CD14-positive monocyte (primary cell): ENCODE measurements at regions of chr17 and their contacts with region 1.

Region 1: DNA sequence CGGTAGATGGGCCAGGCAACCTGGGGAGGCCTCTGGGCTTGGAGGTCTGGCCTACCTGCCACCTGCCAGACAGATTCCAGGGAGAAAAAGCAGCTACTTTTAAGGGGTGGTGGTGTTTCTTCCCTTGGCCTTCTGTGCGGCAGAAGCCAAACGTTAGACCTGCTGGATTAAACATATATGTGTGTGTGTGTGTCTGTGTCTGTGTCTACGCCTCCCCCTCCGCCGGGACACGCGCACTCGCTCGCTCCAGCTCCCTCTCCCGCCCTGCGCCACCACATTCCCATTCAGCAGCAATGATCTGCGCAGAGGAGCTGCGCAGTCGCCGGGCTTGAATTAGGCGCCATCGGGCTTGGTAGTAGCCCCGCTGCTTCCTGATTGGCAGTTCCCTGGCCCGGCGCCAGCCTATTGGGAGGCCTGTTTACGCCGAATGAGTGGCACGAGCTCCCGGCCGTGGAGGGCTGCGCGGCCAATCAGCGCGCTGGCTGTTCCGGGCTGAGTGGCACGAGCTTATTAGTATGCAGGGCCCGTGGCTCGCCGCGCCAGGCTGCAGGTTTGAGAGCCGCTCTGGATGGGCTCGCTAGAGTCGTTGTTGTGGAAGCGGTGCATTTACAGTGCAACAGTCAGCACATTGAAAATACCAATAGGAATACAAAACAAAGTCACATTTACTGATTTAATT is at the start of gene BAHCC1:
- DNase-seq: peak; percentile 99 to 100 (median 99)
- H3K4me3 ChIP-seq: peak within 1 kb of the TSS; percentile 55 to 93 (median 62)
- H3K4me3 Mint-ChIP-seq: peak within 1 kb of the TSS; percentile 92 to 93
- H3K27ac ChIP-seq: peak within 1 kb of the TSS; percentile 64 to 92
- H3K27ac Mint-ChIP-seq: peak within 1 kb of the TSS; percentile 82 to 95 (median 93)
- H3K4me1 ChIP-seq: peaks cover 48 to 78% of the 10 kb centered on the region in 2 donors
- H3K4me1 Mint-ChIP-seq: peaks cover 49% of the 10 kb centered on the region
- H3K27me3 ChIP-seq: no peaks in the 10 kb centered on the region
- H3K27me3 Mint-ChIP-seq: peaks cover 0 to 4% (median 2%) of the 10 kb centered on the region in 3 donors
- CTCF ChIP-seq: no peak
- polyA plus RNA-seq, gene BAHCC1: 0.11 to 8.8 (median 0.27) TPM

Region 2: DNA sequence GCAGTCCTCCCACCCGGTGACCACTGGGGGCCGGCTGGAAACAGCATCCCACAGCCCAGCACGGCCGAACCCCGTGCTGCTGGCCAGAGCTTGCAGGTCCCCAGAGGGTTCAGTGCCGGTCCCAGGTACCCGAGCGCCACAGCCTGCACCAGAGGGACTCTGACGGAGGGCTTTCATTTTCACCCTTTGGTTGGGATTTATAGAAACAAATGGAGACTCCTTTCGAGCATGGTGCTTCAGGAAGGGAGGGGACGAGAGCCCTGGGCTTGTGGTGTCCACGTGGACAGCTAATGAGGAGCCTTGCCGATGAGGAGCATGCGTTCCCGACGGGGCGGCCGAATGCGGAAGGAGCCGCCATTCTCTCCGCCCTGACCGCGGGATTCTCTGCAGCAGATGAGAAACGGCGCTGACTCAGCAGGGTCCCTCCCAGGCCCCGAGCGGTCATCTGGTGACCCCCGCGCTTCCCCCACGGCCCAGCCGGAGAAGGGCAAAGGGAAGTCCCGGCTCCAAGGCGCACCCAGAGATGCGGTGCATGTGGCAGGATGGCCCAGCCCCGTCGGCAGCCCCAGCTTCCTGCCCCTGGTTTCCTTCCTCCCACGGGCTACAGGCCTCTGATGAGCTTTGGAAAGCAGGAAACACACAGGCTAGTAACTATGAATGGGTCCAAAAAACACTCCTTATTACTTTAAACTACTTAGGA is 109.7 kb before region 1 on chr17:
- intact Hi-C with region 1: loop called in 1 of 2 experiments (anchors 10 kb)
- DNase-seq: peak; percentile 97 to 98 (median 98)
- H3K4me3 ChIP-seq: peak overlapping the region; percentile 5 to 75 (median 44)
- H3K4me3 Mint-ChIP-seq: peak overlapping the region; percentile 79 to 84
- H3K27ac ChIP-seq: peak overlapping the region; percentile 95 to 97
- H3K27ac Mint-ChIP-seq: peak overlapping the region; percentile 93 to 98 (median 96)
- H3K4me1 ChIP-seq: peaks cover 60 to 61% of the 10 kb centered on the region in 2 donors
- H3K4me1 Mint-ChIP-seq: peaks cover 54% of the 10 kb centered on the region
- H3K27me3 ChIP-seq: no peaks in the 10 kb centered on the region
- H3K27me3 Mint-ChIP-seq: no peaks in the 10 kb centered on the region
- CTCF ChIP-seq: no peak

Region 3: DNA sequence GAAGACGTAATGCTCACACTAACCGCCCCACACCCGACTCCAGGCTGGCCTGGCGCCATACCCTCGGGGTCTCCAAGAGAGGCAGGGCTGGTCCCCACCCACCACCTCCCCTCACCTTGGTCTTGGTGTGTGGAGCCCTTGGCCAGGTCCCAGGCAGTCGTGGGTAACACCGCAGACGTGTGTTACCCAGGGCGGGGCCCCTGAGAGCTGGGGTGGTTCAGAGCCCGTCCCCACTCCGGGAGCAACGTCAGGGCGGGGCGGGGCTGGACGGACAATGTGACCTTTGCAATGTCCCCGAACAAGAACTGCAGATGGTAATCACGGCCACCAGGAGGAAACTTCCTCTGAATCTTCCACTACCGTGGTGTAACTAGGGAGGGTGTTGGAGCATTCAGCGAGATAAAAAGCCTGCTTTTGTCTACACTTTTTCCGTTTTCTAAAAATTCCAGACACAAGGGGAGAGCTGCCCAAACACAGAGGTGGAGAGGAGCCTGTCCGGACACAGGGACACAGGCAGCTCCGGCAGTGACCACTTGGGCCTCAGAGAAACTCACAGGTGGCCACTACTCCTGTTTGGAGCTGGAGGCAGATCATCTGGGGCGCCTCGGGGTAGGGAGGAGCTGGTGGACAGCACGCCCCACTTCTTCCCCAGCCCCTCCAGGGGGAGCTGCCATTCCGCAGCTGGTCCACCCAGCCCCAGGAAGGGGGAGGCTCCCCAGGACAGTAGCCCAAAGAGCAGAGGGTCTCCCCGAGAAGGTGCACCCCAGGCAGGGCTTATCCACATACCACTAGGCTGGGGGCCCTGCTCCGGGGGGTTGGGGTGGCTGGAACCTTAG is 85.8 kb before region 1 on chr17:
- intact Hi-C with region 1: loop called in 1 of 2 experiments (anchors 5 kb)
- DNase-seq: peak; percentile 92 to 93 (median 93)
- H3K4me3 ChIP-seq: peak overlapping the region; percentile 25 to 75 (median 33)
- H3K4me3 Mint-ChIP-seq: peak overlapping the region; percentile 76 to 88
- H3K27ac ChIP-seq: peak overlapping the region; percentile 52 to 91
- H3K27ac Mint-ChIP-seq: peak overlapping the region; percentile 90 to 97 (median 96)
- H3K4me1 ChIP-seq: peaks cover 46 to 52% of the 10 kb centered on the region in 2 donors
- H3K4me1 Mint-ChIP-seq: peaks cover 42% of the 10 kb centered on the region
- H3K27me3 ChIP-seq: no peaks in the 10 kb centered on the region
- H3K27me3 Mint-ChIP-seq: peaks cover 0 to 4% (median 3%) of the 10 kb centered on the region in 3 donors
- CTCF ChIP-seq: peak; percentile 73

Region 4: DNA sequence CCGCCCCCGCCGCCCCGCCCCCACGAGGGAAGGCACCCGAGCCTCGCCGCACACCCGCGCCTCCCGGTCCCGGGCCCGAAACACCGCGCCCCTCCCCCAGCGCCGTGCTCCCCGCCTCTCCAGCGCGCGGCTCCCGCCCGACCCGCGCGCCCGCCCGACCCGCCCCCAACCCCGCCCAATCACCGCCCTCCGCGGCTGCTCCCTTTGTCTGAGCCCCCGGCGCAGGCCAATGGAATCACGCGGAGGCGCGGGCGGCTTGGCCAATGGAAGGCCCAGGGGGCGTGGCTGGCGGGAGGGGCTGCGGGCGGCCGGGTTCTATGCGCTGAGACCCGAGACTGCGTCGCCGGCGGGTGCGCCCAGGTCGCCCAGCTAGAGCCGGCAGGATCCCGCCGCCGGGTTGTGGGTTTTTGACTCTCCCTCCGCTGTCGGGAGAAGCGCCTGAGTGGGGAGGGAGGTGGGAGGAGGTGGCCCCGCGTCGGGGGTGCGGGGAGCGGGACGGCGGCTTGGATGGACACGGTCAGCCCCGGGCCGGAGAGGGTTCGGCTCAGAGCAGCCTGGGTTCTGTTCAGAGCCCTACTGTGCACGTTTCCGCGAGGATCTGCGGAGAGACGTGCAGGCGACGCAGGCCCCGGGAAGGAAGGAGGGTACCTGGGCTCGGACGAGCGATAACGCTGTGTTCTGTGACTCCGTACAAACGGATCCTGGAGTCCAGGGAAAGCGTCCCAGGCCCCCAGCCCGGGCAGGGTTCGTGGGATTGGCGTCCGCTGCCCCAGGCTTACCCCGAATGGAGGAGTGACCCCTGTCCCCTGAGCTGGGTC is 48.8 kb before region 1 on chr17:
- intact Hi-C with region 1: loop called in 1 of 2 experiments (anchors 2 kb)
- DNase-seq: peak; percentile 91 to 94 (median 92)
- H3K4me3 ChIP-seq: peak overlapping the region; percentile 46 to 99 (median 74)
- H3K4me3 Mint-ChIP-seq: peak overlapping the region; percentile 72 to 84
- H3K27ac ChIP-seq: peak overlapping the region; percentile 64 to 78
- H3K27ac Mint-ChIP-seq: peak overlapping the region in 6 of 7 donors; percentile 15 to 85 (median 67)
- H3K4me1 ChIP-seq: peaks cover 83 to 87% of the 10 kb centered on the region in 2 donors
- H3K4me1 Mint-ChIP-seq: peaks cover 71% of the 10 kb centered on the region
- H3K27me3 ChIP-seq: peaks cover 0 to 13% of the 10 kb centered on the region in 2 donors
- H3K27me3 Mint-ChIP-seq: peaks cover 2 to 27% (median 18%) of the 10 kb centered on the region in 3 donors
- CTCF ChIP-seq: no peak

Region 5: GRCh38 chr17:81512560-81513371 is 117.7 kb after region 1 on chr17 and contains the start of gene ACTG1:
- intact Hi-C with region 1: loop called (anchors 2 to 5 kb)
- DNase-seq: peak; percentile 81 to 91 (median 90)
- H3K4me3 ChIP-seq: peak within 1 kb of the TSS; percentile 75 to 94 (median 83)
- H3K4me3 Mint-ChIP-seq: peak within 1 kb of the TSS; percentile 95 to 96
- H3K27ac ChIP-seq: peak within 1 kb of the TSS; percentile 84 to 89
- H3K27ac Mint-ChIP-seq: peak within 1 kb of the TSS; percentile 83 to 95 (median 90)
- H3K4me1 ChIP-seq: peaks cover 65 to 84% of the 10 kb centered on the region in 2 donors
- H3K4me1 Mint-ChIP-seq: peaks cover 64% of the 10 kb centered on the region
- H3K27me3 ChIP-seq: no peaks in the 10 kb centered on the region
- H3K27me3 Mint-ChIP-seq: peaks cover 0 to under 1% (median under 1%) of the 10 kb centered on the region in 3 donors
- CTCF ChIP-seq: no peak
- polyA plus RNA-seq, gene ACTG1: 1,133 to 3,195 (median 1,620) TPM

Region 6: DNA sequence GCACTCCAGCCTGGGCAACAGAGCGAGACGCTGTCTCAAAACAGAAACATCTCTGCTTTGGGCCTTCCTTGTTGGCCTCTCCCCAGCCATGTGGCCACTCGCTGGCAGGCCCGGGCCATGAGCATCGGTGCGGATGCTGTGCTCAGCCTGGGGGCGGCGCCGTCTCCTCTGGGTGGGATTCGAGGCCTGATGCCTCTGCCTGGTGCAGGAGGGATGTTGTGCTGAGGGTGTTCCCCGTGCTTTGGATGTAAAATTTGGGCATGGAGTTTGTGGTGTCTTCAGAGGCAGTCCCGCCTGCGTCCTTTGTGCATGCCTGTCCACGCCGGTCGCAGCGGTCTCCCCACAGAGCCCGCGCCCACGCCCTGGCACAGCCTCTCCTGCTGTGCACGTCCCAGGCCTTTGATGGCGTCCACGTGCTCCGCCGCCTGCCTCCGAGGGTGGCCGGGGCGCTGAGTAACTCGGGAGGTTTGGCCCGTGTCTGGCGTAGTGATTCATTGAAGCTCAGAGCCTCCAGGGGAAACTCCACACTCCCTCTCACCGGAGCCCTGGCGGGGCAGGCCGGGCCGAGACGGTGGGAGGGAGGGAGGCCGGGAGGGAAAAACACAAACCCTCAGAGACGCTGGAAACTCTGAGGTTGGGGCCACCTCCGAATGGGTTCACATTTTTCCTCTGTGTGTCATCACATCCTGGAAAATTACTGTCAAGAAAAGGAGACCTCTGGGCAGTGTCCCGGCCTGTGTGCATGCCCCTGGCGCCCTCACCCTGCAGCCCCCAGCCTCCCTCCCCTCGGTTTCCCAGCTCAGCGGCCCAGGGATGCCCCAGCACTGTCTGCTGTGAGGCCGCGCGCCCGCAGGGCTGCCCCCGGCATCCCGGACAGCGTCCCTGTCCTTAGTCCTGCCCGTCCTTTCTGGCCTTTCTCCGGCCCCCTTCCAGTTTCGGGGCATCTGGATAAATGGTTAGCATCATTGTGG is 608.6 kb after region 1 on chr17:
- intact Hi-C with region 1: no loop called
- DNase-seq: no peak
- H3K4me3 ChIP-seq: no peak overlapping the region
- H3K4me3 Mint-ChIP-seq: no peak overlapping the region
- H3K27ac ChIP-seq: no peak overlapping the region
- H3K27ac Mint-ChIP-seq: no peak overlapping the region
- H3K4me1 ChIP-seq: no peaks in the 10 kb centered on the region
- H3K4me1 Mint-ChIP-seq: no peaks in the 10 kb centered on the region
- H3K27me3 ChIP-seq: no peaks in the 10 kb centered on the region
- H3K27me3 Mint-ChIP-seq: peaks cover 0 to 3% (median 2%) of the 10 kb centered on the region in 3 donors
- CTCF ChIP-seq: no peak